ENCODE measurements at regions of chr1 and their contacts with region 1.

Region 1: GRCh38 chr1:230310381-230311163 is 115.6 kb downstream of the PGBD5 start:
- DNase-seq: peak; percentile 72 to 81
- H3K4me3 ChIP-seq: no peak overlapping the region
- H3K4me1 ChIP-seq: peaks cover 3% of the 10 kb centered on the region; the same call in 1 of the 2 replicates
- H3K27me3 ChIP-seq: no peaks in the 10 kb centered on the region

Region 2: DNA sequence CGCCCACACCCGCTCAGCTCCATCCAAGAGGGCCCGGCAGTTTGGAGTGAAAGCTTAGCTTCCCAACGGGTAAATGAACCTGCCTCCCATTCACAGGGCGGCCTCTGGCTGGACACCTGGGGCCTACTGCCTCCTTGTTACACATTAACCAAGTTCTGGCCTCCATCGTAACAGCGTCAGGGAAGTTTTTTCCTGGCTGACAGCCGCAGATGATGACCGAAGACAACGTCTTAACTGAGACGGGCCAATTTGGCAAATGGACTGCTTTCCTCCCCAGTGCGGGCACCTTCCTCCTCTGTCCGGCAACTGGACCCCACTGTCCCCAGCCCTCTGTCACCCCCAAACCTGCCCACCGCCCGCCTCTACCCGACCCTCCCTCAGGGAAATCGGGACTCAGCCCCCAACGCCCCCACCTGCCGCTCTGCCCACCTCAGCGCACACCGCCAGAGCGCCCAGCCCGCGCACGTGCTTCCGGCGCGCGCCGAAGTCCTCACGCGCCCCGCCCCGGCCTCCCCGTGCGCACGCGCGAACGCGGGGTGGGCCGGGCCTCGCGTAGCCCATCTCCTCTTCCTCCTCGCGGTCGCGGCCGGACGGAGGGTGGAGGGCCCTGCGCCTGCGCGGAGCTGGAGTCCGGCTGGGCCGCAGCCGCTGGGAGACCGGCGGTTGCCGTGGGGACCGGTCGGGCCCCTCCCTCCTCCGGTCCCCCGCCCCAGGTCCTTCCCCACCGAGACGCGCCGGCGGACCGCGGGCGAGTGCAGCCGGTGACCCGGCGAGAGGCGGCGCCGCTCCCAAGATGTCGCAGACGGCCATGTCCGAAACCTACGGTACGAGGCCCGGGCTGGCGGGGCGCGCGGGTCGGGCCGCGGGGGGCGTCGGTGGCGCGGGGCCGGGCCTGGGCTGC is 1039.8 kb before region 1 on chr1 and contains the start of gene RAB4A:
- in situ Hi-C with region 1: loop called (anchors 25 kb)
- DNase-seq: peak; percentile 72 to 87
- H3K4me3 ChIP-seq: peak within 1 kb of the TSS; percentile 51
- H3K4me1 ChIP-seq: peaks cover 15% of the 10 kb centered on the region
- H3K27me3 ChIP-seq: no peaks in the 10 kb centered on the region

Region 3: DNA sequence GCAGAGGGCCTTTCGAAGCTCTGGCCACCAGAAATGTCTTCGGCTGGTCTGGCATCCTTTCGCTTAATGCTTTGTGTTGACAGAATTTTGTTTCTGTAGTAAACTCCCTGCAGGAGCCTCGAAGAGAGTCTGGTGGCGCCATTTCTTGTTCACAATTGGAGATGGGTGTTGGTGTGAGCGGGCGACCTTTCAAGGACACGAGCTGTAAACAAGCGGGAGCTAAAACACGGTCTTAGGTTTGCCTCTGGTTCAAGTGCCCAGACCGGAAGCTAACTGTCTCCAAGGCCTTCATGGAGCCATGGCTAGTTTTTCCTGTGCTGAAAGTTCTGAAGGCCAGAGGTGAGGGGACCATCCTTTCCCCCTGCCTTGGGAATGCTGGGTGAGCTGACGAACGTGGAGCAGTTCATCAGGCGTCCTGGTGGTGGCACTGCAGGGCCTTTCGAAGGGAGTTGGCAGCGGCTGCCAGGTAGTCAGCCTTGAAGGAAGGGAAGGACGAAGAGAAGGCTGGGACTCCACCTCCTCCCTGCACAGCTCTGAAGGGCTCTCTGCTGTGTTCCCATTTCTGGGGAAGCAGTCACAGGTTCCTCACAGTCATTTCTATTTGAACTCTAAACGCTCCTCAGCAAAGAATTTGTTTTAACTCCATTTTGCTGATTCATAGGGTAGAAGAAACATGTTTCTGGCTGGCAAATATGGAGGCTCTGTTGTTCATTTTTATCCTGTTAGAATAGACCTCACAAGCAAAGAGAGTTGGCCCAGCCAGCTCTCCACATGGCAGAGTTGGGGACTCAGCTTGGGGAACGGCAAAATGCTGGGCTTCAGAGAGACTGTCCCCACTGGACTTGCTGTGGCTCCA is 649.3 kb before region 1 on chr1:
- in situ Hi-C with region 1: loop called (anchors 25 kb)
- DNase-seq: peak; percentile 53 to 85
- H3K4me3 ChIP-seq: no peak overlapping the region
- H3K4me1 ChIP-seq: no peaks in the 10 kb centered on the region
- H3K27me3 ChIP-seq: no peaks in the 10 kb centered on the region

Region 4: GRCh38 chr1:229714964-229715603 is 595.5 kb before region 1 on chr1:
- in situ Hi-C with region 1: loop called (anchors 10 kb)
- DNase-seq: peak; percentile 13 to 79
- H3K4me3 ChIP-seq: no peak overlapping the region
- H3K4me1 ChIP-seq: no peaks in the 10 kb centered on the region
- H3K27me3 ChIP-seq: no peaks in the 10 kb centered on the region

Region 5: GRCh38 chr1:231357831-231358354 is 1047.3 kb after region 1 on chr1:
- in situ Hi-C with region 1: no loop called
- DNase-seq: peak; percentile 47 to 77
- H3K4me3 ChIP-seq: no peak overlapping the region
- H3K4me1 ChIP-seq: peaks cover 8% of the 10 kb centered on the region
- H3K27me3 ChIP-seq: no peaks in the 10 kb centered on the region